ENCODE measurements at regions of chr9 and their contacts with region 1.

Region 1: GRCh38 chr9:29882767-29883166 is 2309.5 kb upstream of the C9orf72 start:
- DNase-seq: no peak
- ATAC-seq: no peak
- H3K4me3 ChIP-seq: no peak overlapping the region
- H3K27ac ChIP-seq: no peak overlapping the region
- H3K4me1 ChIP-seq: no peaks in the 10 kb centered on the region
- H3K27me3 ChIP-seq: no peaks in the 10 kb centered on the region
- CTCF ChIP-seq: no peak
- EP300 ChIP-seq: no peak
- POLR2A ChIP-seq: no peak
- RAD21 ChIP-seq: no peak

Region 2: GRCh38 chr9:29844251-29844650 is 38.5 kb before region 1 on chr9:
- CTCF ChIA-PET with region 1: no interaction called
- POLR2A ChIA-PET with region 1: no interaction called
- in situ Hi-C with region 1: no loop called
- intact Hi-C with region 1: no loop called
- DNase-seq: no peak
- ATAC-seq: no peak
- H3K4me3 ChIP-seq: no peak overlapping the region
- H3K27ac ChIP-seq: no peak overlapping the region
- H3K4me1 ChIP-seq: no peaks in the 10 kb centered on the region
- H3K27me3 ChIP-seq: no peaks in the 10 kb centered on the region
- CTCF ChIP-seq: no peak
- EP300 ChIP-seq: no peak
- POLR2A ChIP-seq: no peak
- RAD21 ChIP-seq: no peak

Region 3: GRCh38 chr9:29906065-29906464 is 23.3 kb after region 1 on chr9:
- CTCF ChIA-PET with region 1: no interaction called
- POLR2A ChIA-PET with region 1: no interaction called
- in situ Hi-C with region 1: no loop called
- intact Hi-C with region 1: loop called (anchors 2 kb)
- DNase-seq: peak; percentile 6
- ATAC-seq: no peak; the same call in 2 of the 3 replicates
- H3K4me3 ChIP-seq: no peak overlapping the region
- H3K27ac ChIP-seq: no peak overlapping the region
- H3K4me1 ChIP-seq: no peaks in the 10 kb centered on the region; the same call in 1 of the 2 replicates
- H3K27me3 ChIP-seq: no peaks in the 10 kb centered on the region
- CTCF ChIP-seq: no peak
- EP300 ChIP-seq: no peak
- POLR2A ChIP-seq: no peak
- RAD21 ChIP-seq: no peak

Measured in HepG2 (cell line).